RWPE1 (cell line): ENCODE measurements at regions of chr5 and their contacts with region 1.

Region 1: GRCh38 chr5:14727428-14727865 is 62.9 kb downstream of the OTULIN start:
- DNase-seq: peak; percentile 70
- H3K27ac ChIP-seq: no peak overlapping the region
- CTCF ChIP-seq: peak; percentile 98

Region 2: DNA sequence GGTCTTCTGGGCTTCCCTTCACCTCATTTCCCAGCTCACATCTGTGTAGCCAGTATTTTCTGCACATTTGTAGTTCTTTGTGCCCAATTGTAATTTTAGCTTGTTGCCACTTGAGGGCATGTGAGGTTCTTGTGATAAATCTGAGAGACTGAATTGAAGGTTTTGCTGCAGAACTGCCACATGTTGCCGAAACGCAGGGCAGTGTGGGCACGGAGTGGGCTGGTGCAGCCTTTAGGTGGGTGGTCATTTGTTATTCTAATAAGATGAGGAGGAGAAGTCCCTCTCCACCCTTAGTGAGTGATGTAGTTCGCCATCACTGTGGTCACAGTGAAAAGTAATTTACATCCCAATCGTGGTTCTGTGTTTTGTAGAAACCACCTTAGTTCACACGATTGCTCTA is 41.7 kb before region 1 on chr5:
- CTCF ChIA-PET with region 1: interaction called, 11 read pairs
- POLR2A ChIA-PET with region 1: no interaction called
- DNase-seq: peak; percentile 67
- H3K27ac ChIP-seq: peak overlapping the region; percentile 31; the same call in 1 of the 2 replicates
- CTCF ChIP-seq: peak; percentile 85

Region 3: DNA sequence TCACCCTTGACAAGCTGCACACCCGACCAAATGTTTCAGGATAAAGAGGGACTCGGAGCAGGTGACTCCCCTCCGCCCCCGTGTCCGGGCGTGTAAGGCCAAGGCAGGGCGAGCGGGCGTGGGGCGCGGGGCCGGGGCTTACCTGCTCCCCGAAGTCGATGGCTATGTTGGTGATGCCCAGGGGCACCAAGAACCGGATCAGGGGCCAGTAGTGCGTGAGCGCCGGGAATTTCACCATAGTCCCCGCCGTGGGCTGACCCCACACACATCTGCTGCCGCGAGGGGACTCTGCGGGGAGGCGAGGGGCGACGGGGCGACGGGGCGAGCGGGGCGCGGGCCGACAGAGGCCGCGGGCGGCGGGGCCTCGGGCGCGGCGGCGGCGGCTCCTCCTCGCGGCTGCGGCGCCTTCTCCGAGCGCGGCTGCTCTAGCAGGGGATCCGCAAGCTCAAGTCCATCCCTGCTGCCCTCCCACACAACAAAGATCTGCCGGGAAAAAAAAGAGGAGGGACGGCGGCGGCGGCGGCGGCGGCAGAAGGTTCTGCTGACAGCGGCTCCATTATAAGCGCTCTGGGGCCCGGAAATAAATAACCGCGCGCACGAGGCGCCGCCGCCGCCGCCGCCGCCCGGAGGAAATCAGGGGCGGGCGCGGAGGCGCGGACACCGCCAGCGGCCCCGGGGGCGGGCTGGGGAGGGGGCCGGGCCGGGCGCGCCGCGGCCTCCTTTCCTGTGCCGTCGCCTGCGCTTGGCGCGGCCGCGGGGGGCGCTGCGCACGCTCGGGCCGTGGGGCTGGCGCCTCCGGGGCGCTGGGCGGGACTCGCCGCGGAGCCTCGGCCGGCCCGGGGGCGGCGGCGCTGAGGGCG is 144.0 kb after region 1 on chr5 and contains the start of gene ANKH:
- CTCF ChIA-PET with region 1: interaction called, 18 read pairs
- POLR2A ChIA-PET with region 1: no interaction called
- DNase-seq: peak; percentile 81
- H3K27ac ChIP-seq: peak within 1 kb of the TSS; percentile 90
- CTCF ChIP-seq: peak; percentile 87

Region 4: GRCh38 chr5:15003511-15003920 is 276.1 kb after region 1 on chr5:
- CTCF ChIA-PET with region 1: interaction called, 29 read pairs
- POLR2A ChIA-PET with region 1: no interaction called
- DNase-seq: peak; percentile 83
- H3K27ac ChIP-seq: no peak overlapping the region
- CTCF ChIP-seq: peak; percentile 95

Region 5: DNA sequence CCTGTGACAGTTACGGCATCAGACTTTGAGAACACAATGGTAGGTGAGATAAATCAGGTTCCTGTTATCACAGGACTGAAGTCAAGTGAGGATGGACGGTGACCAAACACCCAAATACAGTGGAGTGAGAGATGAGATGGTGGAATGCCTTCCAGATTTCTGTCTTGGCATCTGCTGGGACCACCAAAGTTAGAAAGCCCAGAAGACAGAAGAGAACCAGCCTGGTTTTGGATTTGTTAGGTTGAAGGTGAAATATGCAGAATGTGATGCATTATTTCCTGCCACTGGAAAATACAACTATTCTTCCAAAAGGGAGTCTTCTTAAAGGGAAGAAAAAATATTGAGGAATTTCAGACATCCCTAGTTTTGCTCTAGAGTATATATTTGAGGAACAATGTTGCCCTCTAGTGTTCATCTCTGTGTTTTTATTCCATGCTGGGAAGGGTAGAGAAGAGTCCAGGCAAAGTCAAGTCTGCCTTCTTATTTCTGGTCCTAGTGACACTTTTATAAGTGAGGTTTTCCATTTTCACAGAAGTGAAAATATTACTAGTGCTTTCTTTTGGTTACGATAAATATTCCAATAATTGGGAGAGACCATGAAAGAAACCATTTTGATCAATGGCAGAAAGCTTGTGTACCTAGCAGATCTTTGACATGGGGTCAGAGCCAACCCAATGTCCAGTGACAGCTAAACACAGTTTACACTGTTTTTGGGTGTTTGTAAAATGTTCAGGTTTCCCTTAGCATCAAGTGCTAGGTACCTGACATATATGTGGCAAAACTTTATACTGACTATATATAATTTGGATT is 286.4 kb after region 1 on chr5:
- CTCF ChIA-PET with region 1: interaction called, 12 read pairs
- POLR2A ChIA-PET with region 1: no interaction called
- DNase-seq: peak; percentile 58
- H3K27ac ChIP-seq: no peak overlapping the region
- CTCF ChIP-seq: peak; percentile 85